PC-3 (cell line): ENCODE measurements at regions of chr20 and their contacts with region 1.

Region 1: GRCh38 chr20:3051385-3052019 is 5.7 kb downstream of the MRPS26 start:
- DNase-seq: peak; percentile 20
- ATAC-seq: 0 out of 2 replicates have a peak, but pooled peaks have one; percentile 11
- H3K4me3 ChIP-seq: no peak overlapping the region
- H3K27ac ChIP-seq: no peak overlapping the region
- H3K4me1 ChIP-seq: peaks cover 6% of the 10 kb centered on the region
- H3K27me3 ChIP-seq: no peaks in the 10 kb centered on the region
- CTCF ChIP-seq: no peak

Region 2: DNA sequence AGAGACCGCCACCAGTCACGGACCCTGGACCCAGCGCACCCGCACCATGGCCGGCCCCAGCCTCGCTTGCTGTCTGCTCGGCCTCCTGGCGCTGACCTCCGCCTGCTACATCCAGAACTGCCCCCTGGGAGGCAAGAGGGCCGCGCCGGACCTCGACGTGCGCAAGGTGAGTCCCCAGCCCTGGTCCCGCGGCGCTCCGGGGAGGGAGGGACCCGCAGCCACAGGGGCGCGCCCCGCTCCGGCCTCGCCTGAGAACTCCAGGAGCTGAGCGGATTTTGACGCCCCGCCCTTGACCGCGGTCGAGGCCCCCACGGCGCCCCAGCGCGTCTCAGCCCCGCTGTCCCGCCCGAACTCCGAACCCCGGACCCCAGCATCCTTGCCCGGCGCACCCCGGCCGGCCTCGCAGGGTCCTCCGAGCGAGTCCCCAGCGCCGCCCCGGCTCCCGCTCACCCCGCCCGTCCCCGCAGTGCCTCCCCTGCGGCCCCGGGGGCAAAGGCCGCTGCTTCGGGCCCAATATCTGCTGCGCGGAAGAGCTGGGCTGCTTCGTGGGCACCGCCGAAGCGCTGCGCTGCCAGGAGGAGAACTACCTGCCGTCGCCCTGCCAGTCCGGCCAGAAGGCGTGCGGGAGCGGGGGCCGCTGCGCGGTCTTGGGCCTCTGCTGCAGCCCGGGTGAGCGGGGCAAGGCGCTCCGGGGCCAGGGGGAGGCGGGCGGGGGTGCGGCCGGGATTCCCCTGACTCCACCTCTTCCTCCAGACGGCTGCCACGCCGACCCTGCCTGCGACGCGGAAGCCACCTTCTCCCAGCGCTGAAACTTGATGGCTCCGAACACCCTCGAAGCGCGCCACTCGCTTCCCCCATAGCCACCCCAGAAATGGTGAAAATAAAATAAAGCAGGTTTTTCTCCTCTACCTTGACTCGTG is 20.4 kb after region 1 on chr20 and contains the start of gene OXT:
- CTCF ChIA-PET with region 1: no interaction called
- POLR2A ChIA-PET with region 1: no interaction called
- intact Hi-C with region 1: loop called (anchors 1 kb)
- DNase-seq: no peak
- ATAC-seq: no peak
- H3K4me3 ChIP-seq: no peak within 1 kb of the TSS
- H3K27ac ChIP-seq: no peak within 1 kb of the TSS
- H3K4me1 ChIP-seq: no peaks in the 10 kb centered on the region
- H3K27me3 ChIP-seq: no peaks in the 10 kb centered on the region
- CTCF ChIP-seq: no peak
- total RNA-seq, gene OXT: not detected in 2 replicates

Region 3: GRCh38 chr20:3115190-3116107 is 63.9 kb after region 1 on chr20:
- CTCF ChIA-PET with region 1: no interaction called
- POLR2A ChIA-PET with region 1: no interaction called
- intact Hi-C with region 1: loop called (anchors 1 kb)
- DNase-seq: peak; percentile 76
- ATAC-seq: peak; percentile 54
- H3K4me3 ChIP-seq: no peak overlapping the region
- H3K27ac ChIP-seq: no peak overlapping the region
- H3K4me1 ChIP-seq: no peaks in the 10 kb centered on the region
- H3K27me3 ChIP-seq: no peaks in the 10 kb centered on the region
- CTCF ChIP-seq: peak; percentile 69

Region 4: GRCh38 chr20:3276680-3277015 is 225.1 kb after region 1 on chr20:
- CTCF ChIA-PET with region 1: interaction called, 3 read pairs
- POLR2A ChIA-PET with region 1: no interaction called
- intact Hi-C with region 1: loop called (anchors 5 kb)
- DNase-seq: peak; percentile 65
- ATAC-seq: peak; percentile 90
- H3K4me3 ChIP-seq: no peak overlapping the region
- H3K27ac ChIP-seq: no peak overlapping the region
- H3K4me1 ChIP-seq: no peaks in the 10 kb centered on the region
- H3K27me3 ChIP-seq: no peaks in the 10 kb centered on the region
- CTCF ChIP-seq: peak; percentile 72

Region 5: DNA sequence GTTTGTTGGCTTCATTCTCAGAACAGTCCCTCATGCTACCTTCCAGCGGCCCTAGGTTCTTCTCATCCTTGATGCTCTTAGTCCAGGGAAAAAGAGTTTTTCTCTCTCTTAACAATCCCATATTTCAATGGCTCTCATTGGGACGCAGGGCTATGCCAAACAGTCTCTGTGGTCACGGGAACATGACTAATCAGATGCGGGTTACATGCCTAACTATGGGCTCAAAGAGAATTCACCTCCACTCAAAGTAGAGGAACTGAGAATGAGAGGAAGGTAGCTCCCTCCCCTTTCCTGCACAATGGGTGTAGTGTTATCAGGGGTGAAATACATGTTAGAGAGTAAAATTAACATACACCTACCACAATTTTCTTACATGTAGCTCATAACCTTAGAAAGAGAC is 401.2 kb after region 1 on chr20:
- CTCF ChIA-PET with region 1: no interaction called
- POLR2A ChIA-PET with region 1: no interaction called
- intact Hi-C with region 1: no loop called
- DNase-seq: peak; percentile 26
- ATAC-seq: 0 out of 2 replicates have a peak, but pooled peaks have one; percentile 27
- H3K4me3 ChIP-seq: no peak overlapping the region
- H3K27ac ChIP-seq: no peak overlapping the region
- H3K4me1 ChIP-seq: no peaks in the 10 kb centered on the region
- H3K27me3 ChIP-seq: peaks cover 8% of the 10 kb centered on the region; the same call in 1 of the 2 replicates
- CTCF ChIP-seq: no peak